Naive thymus-derived CD4-positive, alpha-beta T cell (primary cell): ENCODE measurements at regions of chr11 and their contacts with region 1.

Region 1: DNA sequence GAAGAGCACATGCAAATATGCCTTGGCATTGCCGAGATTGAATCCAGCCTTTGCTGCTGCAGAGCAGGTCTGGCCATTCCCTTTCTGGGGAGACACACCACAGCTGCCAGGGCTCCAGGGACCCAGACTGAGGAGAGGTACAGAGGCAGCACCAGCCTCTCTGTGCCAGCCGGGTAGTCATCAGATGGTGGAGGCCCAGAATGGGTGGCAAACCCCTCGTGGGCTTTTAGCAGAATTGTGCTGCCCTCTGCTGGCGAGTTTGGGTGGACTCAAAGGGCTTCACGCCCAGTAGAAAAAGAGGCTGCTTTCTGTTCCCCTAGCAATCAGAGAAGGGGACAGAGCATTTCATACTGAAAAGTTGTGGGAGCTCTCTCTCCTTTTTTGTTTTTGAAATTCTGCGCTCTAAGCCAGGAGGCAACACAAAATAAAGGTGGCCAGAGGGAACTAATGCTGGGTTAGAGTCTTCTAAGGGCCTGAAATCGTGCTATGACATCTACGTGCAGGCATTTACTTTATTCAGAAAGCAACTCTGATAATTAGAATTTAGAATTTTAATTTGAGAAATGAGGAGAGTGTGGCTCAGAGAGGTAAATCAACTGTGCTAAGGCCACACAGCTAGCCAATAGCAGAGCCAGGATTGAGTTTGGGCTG is 158.8 kb upstream of the NAV2 start:
- DNase-seq: peak; percentile 12 to 68 (median 38)
- ATAC-seq: peak; percentile 65
- H3K4me3 ChIP-seq: no peak overlapping the region
- H3K4me3 Mint-ChIP-seq: no peak overlapping the region
- H3K27ac ChIP-seq: no peak overlapping the region
- H3K27ac Mint-ChIP-seq: no peak overlapping the region
- H3K4me1 ChIP-seq: no peaks in the 10 kb centered on the region
- H3K4me1 Mint-ChIP-seq: peaks cover 0 to 4% (median 0%) of the 10 kb centered on the region in 7 donors
- H3K27me3 ChIP-seq: no peaks in the 10 kb centered on the region
- H3K27me3 Mint-ChIP-seq: peaks cover 6 to 17% (median 9%) of the 10 kb centered on the region in 5 donors

Region 2: DNA sequence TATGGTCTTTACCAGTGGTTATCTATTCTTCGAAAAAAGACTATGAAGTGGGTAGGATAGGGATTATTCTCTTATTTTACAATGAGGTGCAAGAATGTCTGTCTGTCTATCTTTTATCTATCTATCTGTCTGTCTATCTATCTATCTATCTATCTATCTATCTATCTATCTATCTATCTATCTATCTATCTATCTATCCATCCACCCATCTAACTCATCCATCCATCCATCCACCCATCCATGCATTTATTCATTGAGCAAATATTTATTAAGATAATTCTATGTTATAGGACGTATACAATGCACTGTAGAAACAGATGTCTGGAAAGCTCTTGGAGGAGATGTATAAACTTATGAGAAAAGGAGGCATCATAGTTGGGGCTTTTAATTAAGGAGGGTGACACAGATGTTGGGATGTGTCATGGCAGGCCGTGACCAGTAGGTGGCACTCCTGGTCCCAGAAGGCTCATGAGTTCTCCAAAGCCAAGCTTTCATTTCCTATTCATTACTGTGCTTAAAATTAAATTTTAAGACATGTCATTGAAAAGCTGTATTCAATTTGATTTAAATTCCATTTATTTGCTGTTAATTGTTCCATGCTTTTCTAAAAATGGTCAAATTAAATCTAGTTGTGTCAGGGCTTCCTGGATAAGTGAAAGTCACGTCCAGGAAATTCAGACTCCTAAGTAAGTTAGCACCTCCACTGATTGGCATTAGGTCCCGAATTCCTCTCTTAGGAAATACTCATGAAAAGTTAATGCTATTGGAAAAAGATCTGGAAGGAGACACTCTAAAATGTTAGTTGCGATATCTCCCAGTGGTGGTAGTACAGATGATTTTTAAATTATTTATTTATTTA is 294.1 kb before region 1 on chr11:
- CTCF ChIA-PET with region 1: no interaction called
- POLR2A ChIA-PET with region 1: no interaction called
- intact Hi-C with region 1: loop called in 1 of 2 experiments (anchors 5 kb)
- DNase-seq: peak in 7 of 9 donors; percentile 32 to 57 (median 38)
- ATAC-seq: peak; percentile 88
- H3K4me3 ChIP-seq: no peak overlapping the region
- H3K4me3 Mint-ChIP-seq: no peak overlapping the region
- H3K27ac ChIP-seq: no peak overlapping the region
- H3K27ac Mint-ChIP-seq: no peak overlapping the region
- H3K4me1 ChIP-seq: no peaks in the 10 kb centered on the region
- H3K4me1 Mint-ChIP-seq: peaks cover 0 to 3% (median 0%) of the 10 kb centered on the region in 7 donors
- H3K27me3 ChIP-seq: no peaks in the 10 kb centered on the region
- H3K27me3 Mint-ChIP-seq: peaks cover 0 to 17% (median 14%) of the 10 kb centered on the region in 5 donors

Region 3: GRCh38 chr11:19311308-19312030 is 242.3 kb before region 1 on chr11:
- CTCF ChIA-PET with region 1: no interaction called
- POLR2A ChIA-PET with region 1: no interaction called
- intact Hi-C with region 1: loop called in 1 of 2 experiments (anchors 1 kb)
- DNase-seq: peak in 2 of 9 donors; percentile 8 to 39
- ATAC-seq: peak; percentile 67
- H3K4me3 ChIP-seq: no peak overlapping the region
- H3K4me3 Mint-ChIP-seq: no peak overlapping the region
- H3K27ac ChIP-seq: no peak overlapping the region
- H3K27ac Mint-ChIP-seq: no peak overlapping the region
- H3K4me1 ChIP-seq: no peaks in the 10 kb centered on the region
- H3K4me1 Mint-ChIP-seq: peaks cover 0 to 3% (median 0%) of the 10 kb centered on the region in 7 donors
- H3K27me3 ChIP-seq: no peaks in the 10 kb centered on the region
- H3K27me3 Mint-ChIP-seq: peaks cover 0 to 8% (median 0%) of the 10 kb centered on the region in 5 donors

Region 4: DNA sequence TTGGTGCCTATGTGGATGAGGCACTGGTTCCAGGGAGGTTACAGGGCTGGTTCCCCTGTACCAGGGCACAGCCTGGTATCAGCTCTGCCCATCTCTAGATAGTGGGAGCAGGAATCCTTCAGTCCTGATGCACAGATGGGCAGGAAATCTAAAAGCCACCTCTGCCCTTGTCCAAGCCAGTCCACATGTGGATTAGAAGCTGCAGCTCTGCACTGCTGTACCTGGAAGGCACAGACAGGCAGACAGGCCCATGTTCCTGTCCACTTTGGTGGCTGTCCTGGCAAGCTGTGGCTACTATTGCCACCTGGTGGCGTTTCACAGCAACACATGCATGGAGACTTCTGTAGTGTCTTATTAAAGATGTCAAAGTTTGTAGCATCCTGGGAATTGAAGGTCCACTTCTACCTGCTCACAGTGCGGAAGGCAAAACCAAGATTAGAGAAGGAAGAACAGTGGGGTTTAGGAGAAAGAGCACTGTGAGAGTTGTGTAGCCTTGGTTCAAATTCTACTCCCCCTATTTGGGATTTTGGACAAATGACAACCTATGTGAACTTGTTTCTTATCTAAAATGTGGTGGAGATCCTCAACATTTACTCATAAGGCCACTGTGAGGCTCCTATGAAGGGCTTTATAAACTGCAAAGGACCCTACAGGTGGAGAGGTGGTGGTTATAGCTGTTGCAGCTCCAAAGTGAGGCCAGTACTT is 188.9 kb after region 1 on chr11:
- CTCF ChIA-PET with region 1: interaction called, 6 read pairs
- POLR2A ChIA-PET with region 1: no interaction called
- intact Hi-C with region 1: loop called in 1 of 2 experiments (anchors 1 kb)
- DNase-seq: peak; percentile 8 to 57 (median 40)
- ATAC-seq: peak; percentile 81
- H3K4me3 ChIP-seq: no peak overlapping the region
- H3K4me3 Mint-ChIP-seq: no peak overlapping the region
- H3K27ac ChIP-seq: no peak overlapping the region
- H3K27ac Mint-ChIP-seq: no peak overlapping the region
- H3K4me1 ChIP-seq: no peaks in the 10 kb centered on the region
- H3K4me1 Mint-ChIP-seq: no peaks in the 10 kb centered on the region
- H3K27me3 ChIP-seq: no peaks in the 10 kb centered on the region
- H3K27me3 Mint-ChIP-seq: peaks cover 0 to 12% (median 0%) of the 10 kb centered on the region in 5 donors

Region 5: DNA sequence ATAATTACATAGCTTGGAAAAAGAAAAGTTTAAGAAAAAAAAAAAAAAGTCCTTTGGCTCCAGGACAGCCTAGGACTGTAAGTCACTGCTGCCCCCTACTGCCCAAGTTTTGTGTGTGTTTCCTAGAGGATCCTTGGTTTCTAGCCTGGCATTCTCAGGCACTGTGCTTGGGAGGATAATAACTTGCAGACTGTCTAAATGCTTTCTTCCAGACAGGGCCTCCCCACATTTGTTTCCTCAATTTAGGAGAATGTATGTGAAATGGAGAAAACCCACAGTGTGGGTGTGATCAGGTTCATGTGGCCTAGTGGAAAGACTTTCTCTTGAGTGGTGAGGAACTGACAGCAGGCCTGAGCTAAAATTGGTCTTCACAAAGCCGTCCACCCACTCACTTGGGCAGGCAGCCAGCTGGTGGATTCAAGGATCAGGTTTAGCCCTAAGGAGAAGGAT is 349.8 kb after region 1 on chr11:
- CTCF ChIA-PET with region 1: no interaction called
- POLR2A ChIA-PET with region 1: no interaction called
- intact Hi-C with region 1: loop called (anchors 2 kb)
- DNase-seq: peak in 4 of 9 donors; percentile 1 to 23 (median 4)
- ATAC-seq: no peak
- H3K4me3 ChIP-seq: no peak overlapping the region
- H3K4me3 Mint-ChIP-seq: no peak overlapping the region
- H3K27ac ChIP-seq: no peak overlapping the region
- H3K27ac Mint-ChIP-seq: no peak overlapping the region
- H3K4me1 ChIP-seq: no peaks in the 10 kb centered on the region
- H3K4me1 Mint-ChIP-seq: no peaks in the 10 kb centered on the region
- H3K27me3 ChIP-seq: no peaks in the 10 kb centered on the region
- H3K27me3 Mint-ChIP-seq: peaks cover 0 to 9% (median 0%) of the 10 kb centered on the region in 5 donors